ENCODE measurements at regions of chr9 and their contacts with region 1.

Region 1: GRCh38 chr9:33187519-33188218 is 20.5 kb upstream of the B4GALT1 start:
- DNase-seq: peak; percentile 51 to 75
- ATAC-seq: peak; percentile 95
- H3K4me3 ChIP-seq: no peak overlapping the region
- H3K27ac ChIP-seq: peak overlapping the region; percentile 66 to 76 (median 70)
- H3K4me1 ChIP-seq: peaks cover 31 to 34% of the 10 kb centered on the region in 2 donors
- H3K27me3 ChIP-seq: no peaks in the 10 kb centered on the region
- CTCF ChIP-seq: no peak
- POLR2A ChIP-seq: no peak

Region 2: DNA sequence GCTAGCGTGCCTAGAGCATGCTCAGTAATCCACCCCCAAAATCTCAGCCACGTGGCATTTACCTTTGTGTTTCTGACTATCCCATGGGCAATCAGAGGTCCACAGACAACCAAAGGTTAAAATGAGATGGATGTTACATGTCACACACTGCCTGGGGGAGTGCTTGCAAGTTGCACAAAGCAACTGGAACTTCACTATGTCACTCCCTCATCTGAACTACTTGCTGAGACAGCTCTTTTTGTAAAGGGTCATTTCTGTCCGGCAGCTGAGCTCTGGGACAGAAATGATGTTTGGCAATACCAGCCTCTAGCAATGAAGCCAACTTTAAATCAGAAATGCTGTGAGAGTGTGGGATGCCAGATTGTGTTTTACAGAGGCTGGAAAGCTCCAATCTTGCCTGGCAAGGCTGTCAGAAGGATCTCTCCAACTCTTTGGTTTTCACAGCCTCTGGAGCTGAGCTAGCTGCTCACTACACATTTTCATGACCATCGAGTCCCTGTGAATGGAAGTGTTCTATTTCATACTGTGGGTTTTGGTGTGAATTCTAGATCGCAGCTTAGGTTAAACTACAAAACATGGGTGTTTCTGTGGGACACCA is 470.6 kb before region 1 on chr9:
- in situ Hi-C with region 1: no loop called
- intact Hi-C with region 1: no loop called
- DNase-seq: no peak
- ATAC-seq: no peak
- H3K4me3 ChIP-seq: no peak overlapping the region
- H3K27ac ChIP-seq: no peak overlapping the region
- H3K4me1 ChIP-seq: no peaks in the 10 kb centered on the region
- H3K27me3 ChIP-seq: no peaks in the 10 kb centered on the region
- CTCF ChIP-seq: no peak
- POLR2A ChIP-seq: no peak

Region 3: DNA sequence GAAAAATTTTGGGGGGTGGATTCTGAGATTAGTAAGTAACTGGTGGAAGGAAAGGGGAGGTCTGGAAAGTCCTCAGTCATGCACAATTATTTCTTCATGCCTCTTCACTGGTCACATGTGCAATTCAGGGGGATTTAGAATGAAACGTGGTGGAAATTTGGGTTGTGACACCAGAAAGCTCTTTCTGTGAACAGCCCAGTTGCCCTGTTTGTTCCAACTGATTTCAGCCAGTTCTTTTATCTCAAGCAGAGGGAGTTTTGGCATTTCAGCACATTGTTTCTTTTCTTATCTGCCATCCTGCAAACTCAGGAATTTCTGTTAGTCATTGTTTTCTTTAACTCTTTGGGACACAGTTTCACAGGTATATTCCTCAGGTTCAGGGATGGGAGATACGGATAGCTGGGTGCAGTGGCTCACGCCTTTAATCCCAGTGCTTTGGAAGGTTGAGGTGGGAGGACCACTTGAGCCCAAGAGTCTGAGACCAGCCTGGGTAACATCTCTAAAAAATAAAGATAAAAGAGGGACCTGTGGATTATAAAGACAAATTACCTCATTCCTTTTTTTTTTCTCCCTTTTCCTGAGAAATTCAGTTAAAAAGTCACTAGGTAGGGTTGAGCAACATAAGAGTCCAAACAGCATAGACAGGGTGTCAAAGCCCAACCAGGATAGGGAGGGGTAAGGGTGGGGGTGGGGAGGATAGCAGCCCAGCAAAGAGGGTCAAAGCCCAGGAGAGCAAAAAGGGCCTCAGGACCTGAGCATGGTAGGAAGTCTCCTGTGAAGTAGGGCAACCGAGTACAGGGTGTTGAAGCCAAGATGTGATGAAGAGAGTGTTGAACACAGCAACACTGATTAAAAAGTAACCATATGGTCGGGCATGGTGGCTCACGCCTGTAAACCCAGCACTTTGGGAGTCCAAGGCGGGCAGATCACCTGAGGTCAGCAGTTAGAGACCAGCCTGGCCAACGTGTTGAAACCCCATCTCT is 15.1 kb before region 1 on chr9:
- in situ Hi-C with region 1: no loop called
- intact Hi-C with region 1: loop called (anchors 2 kb)
- DNase-seq: no peak
- ATAC-seq: no peak
- H3K4me3 ChIP-seq: no peak overlapping the region
- H3K27ac ChIP-seq: no peak overlapping the region
- H3K4me1 ChIP-seq: peaks cover 12 to 13% of the 10 kb centered on the region in 2 donors
- H3K27me3 ChIP-seq: no peaks in the 10 kb centered on the region
- CTCF ChIP-seq: no peak
- POLR2A ChIP-seq: no peak

Measured in gastrocnemius medialis (tissue), 4 donors.